ENCODE measurements at regions of chr13 and their contacts with region 1.

Region 1: DNA sequence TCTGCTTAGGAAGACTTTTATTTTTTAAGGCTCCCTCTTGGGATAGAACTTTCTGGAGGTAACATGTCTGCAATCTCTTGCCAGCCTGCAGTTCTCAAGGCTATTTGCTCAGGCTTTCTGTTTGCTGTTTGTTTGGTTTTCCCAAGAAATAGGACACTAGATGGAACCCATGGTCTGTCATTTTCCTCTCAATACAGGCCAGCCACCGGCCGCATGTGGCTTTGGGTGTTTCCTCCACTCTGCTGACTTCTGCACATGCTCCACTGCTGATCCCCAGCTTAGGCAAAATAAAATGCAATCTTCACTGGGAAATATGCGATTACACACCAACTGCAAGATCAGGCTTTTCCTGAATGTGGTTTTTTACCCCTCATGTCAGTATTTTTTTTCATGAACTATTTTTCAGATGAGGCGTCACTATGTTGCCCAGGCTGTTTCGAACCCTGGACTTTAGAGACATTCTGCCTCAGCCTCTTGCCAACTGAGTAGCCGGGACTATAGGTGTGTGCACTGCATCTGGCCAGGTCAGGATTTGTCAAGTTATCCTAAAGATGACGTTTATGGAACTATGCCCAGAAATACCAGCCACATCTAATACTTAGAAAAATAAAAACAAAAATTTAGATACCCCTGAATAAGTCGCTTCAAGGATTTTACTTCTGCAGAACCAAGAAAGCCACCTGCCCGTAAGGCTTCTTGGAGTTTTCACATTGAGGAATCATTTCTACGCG is 94.3 kb upstream of the PABPC3 start:
- DNase-seq: no peak
- H3K4me3 ChIP-seq: no peak overlapping the region
- H3K27ac ChIP-seq: no peak overlapping the region
- H3K4me1 ChIP-seq: peaks cover 0 to 5% (median 0%) of the 10 kb centered on the region in 4 donors
- H3K27me3 ChIP-seq: no peaks in the 10 kb centered on the region
- CTCF ChIP-seq: no peak
- EP300 ChIP-seq: no peak
- POLR2A ChIP-seq: no peak

Region 2: GRCh38 chr13:24788538-24788937 is 213.1 kb before region 1 on chr13:
- intact Hi-C with region 1: no loop called
- DNase-seq: no peak
- H3K4me3 ChIP-seq: no peak overlapping the region
- H3K27ac ChIP-seq: no peak overlapping the region
- H3K4me1 ChIP-seq: no peaks in the 10 kb centered on the region
- H3K27me3 ChIP-seq: no peaks in the 10 kb centered on the region
- CTCF ChIP-seq: no peak
- EP300 ChIP-seq: no peak
- POLR2A ChIP-seq: no peak

Region 3: GRCh38 chr13:24938966-24939365 is 62.7 kb before region 1 on chr13:
- intact Hi-C with region 1: no loop called
- DNase-seq: no peak
- H3K4me3 ChIP-seq: no peak overlapping the region
- H3K27ac ChIP-seq: no peak overlapping the region
- H3K4me1 ChIP-seq: no peaks in the 10 kb centered on the region
- H3K27me3 ChIP-seq: no peaks in the 10 kb centered on the region
- CTCF ChIP-seq: no peak
- EP300 ChIP-seq: no peak
- POLR2A ChIP-seq: no peak

Region 4: DNA sequence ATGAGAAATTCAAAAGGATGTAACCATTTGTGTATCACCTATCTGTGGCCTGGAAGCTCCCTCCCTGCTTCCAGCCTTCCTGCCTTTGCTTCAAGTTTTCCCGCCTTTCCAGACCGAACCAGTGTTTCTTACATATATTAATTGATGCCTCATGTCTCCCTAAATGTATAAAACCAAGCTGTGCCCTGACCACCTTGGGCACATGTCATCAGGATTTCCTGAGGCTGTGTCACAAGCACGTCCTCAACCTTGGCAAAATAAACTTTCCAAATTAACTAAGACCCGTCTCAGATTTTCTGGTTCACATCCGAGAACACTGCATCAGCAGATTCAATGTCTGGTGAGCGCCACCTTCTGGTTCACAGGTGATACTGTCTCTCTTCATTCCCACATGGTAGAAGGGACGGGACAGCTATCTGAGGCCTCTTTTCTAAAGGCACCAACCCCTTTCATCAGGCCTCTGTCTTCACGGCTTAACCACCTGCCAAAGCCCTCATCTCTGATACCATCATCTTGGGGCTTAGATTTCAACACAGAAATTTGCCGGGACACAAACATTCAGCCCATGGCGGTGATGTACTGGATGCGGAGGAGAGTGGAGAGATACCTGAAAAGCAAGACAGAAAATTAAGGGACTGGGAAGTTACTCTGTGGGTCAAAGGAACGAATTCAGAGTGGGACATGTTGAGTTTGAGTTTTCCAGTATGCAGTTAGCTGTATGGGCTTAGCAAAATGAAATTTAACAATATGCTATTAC is 35.6 kb after region 1 on chr13:
- intact Hi-C with region 1: loop called (anchors 1 kb)
- DNase-seq: no peak
- H3K4me3 ChIP-seq: no peak overlapping the region
- H3K27ac ChIP-seq: no peak overlapping the region
- H3K4me1 ChIP-seq: no peaks in the 10 kb centered on the region
- H3K27me3 ChIP-seq: peaks cover 0 to 11% (median 0%) of the 10 kb centered on the region in 3 donors
- CTCF ChIP-seq: peak; percentile 39 to 75 (median 61)
- EP300 ChIP-seq: no peak
- POLR2A ChIP-seq: no peak

Region 5: GRCh38 chr13:25114220-25114619 is 112.6 kb after region 1 on chr13:
- intact Hi-C with region 1: loop called (anchors 5 kb)
- DNase-seq: peak; percentile 75
- H3K4me3 ChIP-seq: no peak overlapping the region
- H3K27ac ChIP-seq: no peak overlapping the region
- H3K4me1 ChIP-seq: no peaks in the 10 kb centered on the region
- H3K27me3 ChIP-seq: peaks cover 0 to 4% (median 0%) of the 10 kb centered on the region in 3 donors
- CTCF ChIP-seq: peak in 3 of 4 experiments; percentile 42 to 69 (median 50)
- EP300 ChIP-seq: no peak
- POLR2A ChIP-seq: no peak

Measured in sigmoid colon (tissue), 7 donors.